B cell (primary cell): ENCODE measurements at regions of chr3 and their contacts with region 1.

Region 1: DNA sequence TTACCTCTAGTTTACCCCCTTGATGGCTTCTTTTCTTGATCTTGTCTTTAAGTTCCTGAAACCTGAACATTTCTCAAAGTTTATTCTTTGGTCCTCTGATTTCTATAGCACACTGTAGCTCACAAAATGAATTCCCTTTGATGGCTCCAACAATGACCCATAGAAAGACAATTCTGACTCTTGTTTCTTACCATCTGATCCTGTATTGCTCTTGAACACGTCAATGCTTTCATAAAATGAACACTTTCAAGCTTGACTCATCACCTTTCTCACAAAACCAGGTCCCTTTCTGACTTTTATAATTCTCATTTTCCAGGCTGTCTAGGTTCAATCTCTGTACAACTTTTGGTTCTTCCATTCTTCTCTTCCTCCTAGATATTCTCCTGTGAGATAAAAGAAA is 5.7 kb upstream of the GAP43 start:
- DNase-seq: no peak
- ATAC-seq: no peak
- H3K4me3 ChIP-seq: no peak overlapping the region
- H3K4me3 Mint-ChIP-seq: no peak overlapping the region
- H3K27ac ChIP-seq: no peak overlapping the region
- H3K27ac Mint-ChIP-seq: no peak overlapping the region
- H3K4me1 ChIP-seq: no peaks in the 10 kb centered on the region
- H3K4me1 Mint-ChIP-seq: no peaks in the 10 kb centered on the region
- H3K27me3 ChIP-seq: no peaks in the 10 kb centered on the region
- H3K27me3 Mint-ChIP-seq: peaks cover 4% of the 10 kb centered on the region
- CTCF ChIP-seq: no peak

Region 2: DNA sequence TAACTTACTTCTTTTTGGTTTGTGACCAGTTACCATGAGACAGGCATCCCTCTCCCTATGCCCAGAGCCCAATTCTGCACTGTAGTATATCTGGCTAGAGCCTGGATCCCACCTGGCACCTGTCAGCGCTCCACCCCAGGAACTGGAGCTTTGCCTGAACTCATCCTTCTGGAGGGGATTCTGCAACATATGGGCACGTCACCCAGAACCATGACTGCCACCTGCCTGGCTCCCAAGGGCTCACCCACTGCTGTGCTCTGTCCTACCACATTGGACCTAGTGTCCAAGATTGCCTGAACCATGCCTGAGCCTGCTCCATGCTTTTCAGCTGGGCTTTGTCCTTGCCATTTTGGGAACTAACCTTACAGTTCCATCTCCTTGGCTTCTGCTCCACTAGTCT is 15.4 kb before region 1 on chr3:
- CTCF ChIA-PET with region 1: no interaction called
- POLR2A ChIA-PET with region 1: no interaction called
- intact Hi-C with region 1: loop called (anchors 1 kb)
- DNase-seq: no peak
- ATAC-seq: no peak
- H3K4me3 ChIP-seq: no peak overlapping the region
- H3K4me3 Mint-ChIP-seq: no peak overlapping the region
- H3K27ac ChIP-seq: no peak overlapping the region
- H3K27ac Mint-ChIP-seq: no peak overlapping the region
- H3K4me1 ChIP-seq: no peaks in the 10 kb centered on the region
- H3K4me1 Mint-ChIP-seq: no peaks in the 10 kb centered on the region
- H3K27me3 ChIP-seq: peaks cover 0 to 4% (median 0%) of the 10 kb centered on the region in 4 experiments
- H3K27me3 Mint-ChIP-seq: peaks cover 14% of the 10 kb centered on the region
- CTCF ChIP-seq: no peak

Region 3: GRCh38 chr3:115628075-115628412 is 10.5 kb after region 1 on chr3:
- CTCF ChIA-PET with region 1: no interaction called
- POLR2A ChIA-PET with region 1: no interaction called
- intact Hi-C with region 1: no loop called
- DNase-seq: no peak
- ATAC-seq: no peak
- H3K4me3 ChIP-seq: no peak overlapping the region
- H3K4me3 Mint-ChIP-seq: no peak overlapping the region
- H3K27ac ChIP-seq: no peak overlapping the region
- H3K27ac Mint-ChIP-seq: no peak overlapping the region
- H3K4me1 ChIP-seq: peaks cover 13 to 16% of the 10 kb centered on the region in 2 donors
- H3K4me1 Mint-ChIP-seq: peaks cover 10% of the 10 kb centered on the region
- H3K27me3 ChIP-seq: peaks cover 2 to 32% (median 20%) of the 10 kb centered on the region in 4 experiments
- H3K27me3 Mint-ChIP-seq: peaks cover 34% of the 10 kb centered on the region
- CTCF ChIP-seq: no peak